Activated CD4-positive, alpha-beta memory T cell treated with anti-CD3 and anti-CD28 coated beads for 36 hours (primary cell): ENCODE measurements at regions of chr5 and their contacts with region 1.

Region 1: GRCh38 chr5:139446956-139447779 is 7.8 kb upstream of the DNAJC18 start:
- DNase-seq: peak; percentile 72
- H3K4me3 Mint-ChIP-seq: peak overlapping the region; percentile 7
- H3K27ac Mint-ChIP-seq: peak overlapping the region; percentile 93
- H3K4me1 Mint-ChIP-seq: peaks cover 67% of the 10 kb centered on the region
- H3K27me3 Mint-ChIP-seq: no peaks in the 10 kb centered on the region

Region 2: GRCh38 chr5:139458580-139459406 is 11.6 kb after region 1 on chr5:
- CTCF ChIA-PET with region 1: interaction called, 16 read pairs
- POLR2A ChIA-PET with region 1: interaction called, 52 read pairs
- intact Hi-C with region 1: loop called (anchors 1 kb)
- DNase-seq: peak; percentile 90
- H3K4me3 Mint-ChIP-seq: peak overlapping the region; percentile 56
- H3K27ac Mint-ChIP-seq: peak overlapping the region; percentile 97
- H3K4me1 Mint-ChIP-seq: peaks cover 65% of the 10 kb centered on the region
- H3K27me3 Mint-ChIP-seq: no peaks in the 10 kb centered on the region

Region 3: GRCh38 chr5:139468421-139468931 is 21.3 kb after region 1 on chr5:
- CTCF ChIA-PET with region 1: interaction called, 3 read pairs
- POLR2A ChIA-PET with region 1: interaction called, 17 read pairs
- intact Hi-C with region 1: loop called (anchors 1 kb)
- DNase-seq: peak; percentile 69
- H3K4me3 Mint-ChIP-seq: peak overlapping the region; percentile 41
- H3K27ac Mint-ChIP-seq: peak overlapping the region; percentile 83
- H3K4me1 Mint-ChIP-seq: peaks cover 51% of the 10 kb centered on the region
- H3K27me3 Mint-ChIP-seq: no peaks in the 10 kb centered on the region